Dendritic cell treated with granulocyte-macrophage colony-stimulating factor and Interleukin-4, amounts not matched to agents 40 ng/mL and 50 ng/mL, for 4 days (primary cell): ENCODE measurements at regions of chr12 and their contacts with region 1.

Region 1: DNA sequence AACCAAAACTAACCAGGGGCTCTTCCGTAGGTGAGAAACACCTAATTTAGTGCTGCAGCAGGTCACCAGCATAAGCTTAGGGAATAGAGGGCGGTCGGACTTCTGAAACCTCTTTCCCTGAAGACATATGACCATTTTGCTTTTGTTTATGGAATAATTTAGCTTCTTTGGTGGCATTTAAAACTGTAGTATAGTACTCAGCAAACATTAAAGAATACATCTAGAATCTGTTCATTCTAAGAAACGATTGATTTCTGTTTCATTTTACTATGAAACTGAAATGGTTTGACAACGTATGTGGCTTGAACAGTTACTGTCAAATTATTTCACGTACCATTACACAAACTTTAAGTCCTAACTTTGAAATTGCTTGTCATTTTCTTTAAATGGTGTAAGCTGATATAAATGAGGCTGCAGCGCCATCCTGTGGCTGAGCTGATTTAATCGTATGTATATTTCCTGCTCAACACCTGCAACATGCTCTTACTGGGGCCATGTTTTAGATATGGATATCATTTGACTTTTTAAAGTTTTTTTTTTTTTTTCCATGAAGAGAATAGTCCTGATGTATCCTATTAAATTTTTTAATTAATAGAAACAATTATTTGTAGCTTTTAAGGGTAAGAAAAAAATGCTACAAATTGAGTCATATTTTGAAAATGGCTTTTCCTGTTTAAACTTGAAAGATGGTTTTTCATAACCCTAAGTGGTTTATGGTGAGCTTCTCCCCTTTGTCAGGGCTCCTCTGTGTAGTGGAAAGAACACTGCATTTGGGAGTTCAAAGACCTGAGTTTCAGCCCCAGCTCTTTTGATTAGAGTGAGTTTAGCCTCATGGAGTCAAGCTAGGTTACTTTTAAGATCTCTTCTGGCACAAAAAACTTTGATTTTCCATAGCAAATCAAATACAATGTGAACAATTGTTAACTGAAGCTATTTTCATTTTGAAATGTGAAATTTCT is 27.4 kb downstream of the CFAP54 start:
- H3K4me3 Mint-ChIP-seq: no peak overlapping the region
- H3K27ac Mint-ChIP-seq: no peak overlapping the region
- H3K4me1 Mint-ChIP-seq: no peaks in the 10 kb centered on the region
- H3K27me3 Mint-ChIP-seq: no peaks in the 10 kb centered on the region

Region 2: GRCh38 chr12:96219698-96220206 is 297.0 kb before region 1 on chr12:
- intact Hi-C with region 1: loop called (anchors 1 kb)
- H3K4me3 Mint-ChIP-seq: no peak overlapping the region
- H3K27ac Mint-ChIP-seq: peak overlapping the region; percentile 14
- H3K4me1 Mint-ChIP-seq: peaks cover 32% of the 10 kb centered on the region
- H3K27me3 Mint-ChIP-seq: no peaks in the 10 kb centered on the region